GM18951 (cell line): ENCODE measurements at regions of chr10 and their contacts with region 1.

Region 1: GRCh38 chr10:132904181-132904819 is 38.1 kb downstream of the CFAP46 start:
- POLR2A ChIP-seq: no peak

Region 2: DNA sequence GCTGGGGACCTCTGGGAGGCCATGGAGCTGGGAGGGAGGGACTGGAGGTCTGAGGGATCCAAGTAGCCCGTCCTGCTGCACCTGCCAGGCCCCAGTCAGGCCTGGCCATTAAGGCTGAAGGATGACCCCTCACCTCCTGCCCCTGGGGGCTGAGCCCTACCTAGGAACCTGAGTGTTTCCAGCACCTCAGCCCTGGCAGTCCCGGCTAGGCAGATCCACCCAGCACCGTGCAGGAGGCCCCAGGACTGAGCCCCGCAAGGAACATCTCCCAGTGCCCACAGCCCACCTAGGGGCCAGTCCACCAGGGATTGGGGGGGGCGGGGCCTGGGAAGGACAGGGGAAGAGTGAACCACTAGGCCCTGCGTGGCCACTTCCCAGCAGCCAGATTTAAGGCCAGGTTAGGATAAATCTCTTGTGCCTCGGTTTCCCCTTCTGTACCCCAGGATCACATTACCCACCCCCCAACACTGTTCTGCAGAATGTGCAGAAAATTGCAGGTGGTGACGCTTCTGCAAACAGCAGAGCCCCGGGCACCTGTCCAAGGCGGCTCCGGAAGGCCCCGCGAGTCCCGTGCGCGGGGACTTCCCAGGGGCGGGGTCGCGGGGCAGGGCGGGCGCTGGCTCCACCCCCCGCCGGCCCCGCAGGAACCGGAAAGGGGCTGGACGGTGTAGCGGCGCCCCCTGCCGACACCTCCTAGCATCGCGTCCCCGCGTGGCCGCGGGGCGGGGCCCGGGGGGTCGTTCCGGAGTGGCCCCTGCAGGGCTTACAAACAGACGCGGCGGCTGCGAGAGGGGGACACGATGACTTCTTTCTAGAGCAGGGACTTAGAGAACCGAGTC is 451.4 kb before region 1 on chr10:
- in situ Hi-C with region 1: no loop called
- POLR2A ChIP-seq: peak; percentile 28

Region 3: GRCh38 chr10:132762267-132762666 is 142.0 kb before region 1 on chr10:
- in situ Hi-C with region 1: no loop called
- POLR2A ChIP-seq: no peak

Region 4: GRCh38 chr10:133230387-133231195 is 326.3 kb after region 1 on chr10:
- in situ Hi-C with region 1: loop called (anchors 25 kb)
- POLR2A ChIP-seq: no peak